HCT116 (cell line): ENCODE measurements at regions of chr10 and their contacts with region 1.

Region 1: DNA sequence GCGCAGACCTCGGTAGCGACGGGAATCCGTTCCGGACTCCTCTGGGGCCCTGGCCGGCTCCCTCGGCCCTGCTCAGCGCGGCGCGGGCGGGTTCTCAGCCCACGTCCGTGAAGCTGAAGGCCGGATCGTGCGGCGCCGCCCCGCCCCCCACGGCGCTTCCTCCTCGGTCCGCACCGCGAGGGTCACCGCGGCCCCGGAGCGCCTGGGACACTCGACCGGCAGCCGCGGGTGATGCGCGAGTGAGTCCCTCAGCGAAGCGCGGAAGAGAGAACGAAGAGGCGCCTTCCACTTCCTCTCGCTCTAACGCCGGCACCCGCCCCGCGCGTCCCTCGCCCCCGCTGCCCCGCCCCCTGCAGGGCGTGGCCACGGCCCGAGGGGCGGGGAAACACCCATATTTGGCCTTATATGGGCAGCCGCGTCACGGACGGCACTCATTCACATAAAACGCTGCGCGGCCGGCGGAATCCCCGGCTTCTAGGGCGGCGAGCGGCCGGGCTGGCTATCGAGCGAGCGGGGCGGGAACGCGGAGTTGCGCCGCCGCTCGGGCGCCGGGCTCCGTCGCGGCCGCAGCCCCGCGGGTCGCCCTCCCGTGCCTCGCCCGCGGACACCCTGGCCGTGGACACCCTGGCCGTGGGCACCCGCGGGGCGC is at the start of gene DUSP5:
- DNase-seq: peak; percentile 93
- ATAC-seq: peak; percentile 64
- H3K4me3 ChIP-seq: peak within 1 kb of the TSS; percentile 90 to 92
- H3K27ac ChIP-seq: peak within 1 kb of the TSS; percentile 65
- H3K4me1 ChIP-seq: peaks cover 41 to 72% of the 10 kb centered on the region in 2 experiments
- H3K27me3 ChIP-seq: no peaks in the 10 kb centered on the region
- CTCF ChIP-seq: no peak
- POLR2A ChIP-seq: peak; percentile 98
- RAD21 ChIP-seq: no peak
- total RNA-seq, gene DUSP5: 137 TPM

Region 2: GRCh38 chr10:110304780-110305421 is 192.7 kb before region 1 on chr10 and contains the start of gene SMNDC1:
- CTCF ChIA-PET with region 1: interaction called, 8 read pairs
- POLR2A ChIA-PET with region 1: interaction called, 7 read pairs
- RAD21 ChIA-PET with region 1: interaction called in 1 of 2 experiments, 5 read pairs
- intact Hi-C with region 1: loop called (anchors 1 kb)
- DNase-seq: peak; percentile 99
- ATAC-seq: peak; percentile 94
- H3K4me3 ChIP-seq: peak within 1 kb of the TSS; percentile 88 to 91
- H3K27ac ChIP-seq: peak within 1 kb of the TSS; percentile 77
- H3K4me1 ChIP-seq: peaks cover 12 to 26% of the 10 kb centered on the region in 2 experiments; a peak in 3 of 4 replicates
- H3K27me3 ChIP-seq: no peaks in the 10 kb centered on the region
- CTCF ChIP-seq: no peak
- POLR2A ChIP-seq: peak; percentile 77
- RAD21 ChIP-seq: no peak
- total RNA-seq, gene SMNDC1: 61.7 TPM

Region 3: GRCh38 chr10:110354322-110354766 is 143.2 kb before region 1 on chr10:
- CTCF ChIA-PET with region 1: interaction called, 9 read pairs
- POLR2A ChIA-PET with region 1: interaction called, 29 read pairs
- RAD21 ChIA-PET with region 1: interaction called, 3 to 7 read pairs
- intact Hi-C with region 1: loop called (anchors 1 kb)
- DNase-seq: peak; percentile 85
- ATAC-seq: peak; percentile 76
- H3K4me3 ChIP-seq: peak overlapping the region; percentile 27 to 36
- H3K27ac ChIP-seq: 0 out of 2 replicates have a peak overlapping the region, but pooled peaks have one; percentile 6
- H3K4me1 ChIP-seq: peaks cover 58 to 68% of the 10 kb centered on the region in 2 experiments
- H3K27me3 ChIP-seq: no peaks in the 10 kb centered on the region
- CTCF ChIP-seq: peak in 2 of 3 experiments; percentile 97; a peak in 4 of 6 replicates
- POLR2A ChIP-seq: no peak
- RAD21 ChIP-seq: no peak

Region 4: GRCh38 chr10:110414563-110415309 is 82.8 kb before region 1 on chr10:
- CTCF ChIA-PET with region 1: no interaction called
- POLR2A ChIA-PET with region 1: interaction called, 438 read pairs
- RAD21 ChIA-PET with region 1: interaction called, 3 to 4 read pairs
- intact Hi-C with region 1: loop called (anchors 1 kb)
- DNase-seq: peak; percentile 98
- ATAC-seq: peak; percentile 70
- H3K4me3 ChIP-seq: peak overlapping the region in 1 of 2 experiments; percentile 32; a peak in 2 of 4 replicates
- H3K27ac ChIP-seq: peak overlapping the region; percentile 95
- H3K4me1 ChIP-seq: peaks cover 84 to 92% of the 10 kb centered on the region in 2 experiments
- H3K27me3 ChIP-seq: no peaks in the 10 kb centered on the region
- CTCF ChIP-seq: no peak
- POLR2A ChIP-seq: peak; percentile 18
- RAD21 ChIP-seq: no peak

Region 5: DNA sequence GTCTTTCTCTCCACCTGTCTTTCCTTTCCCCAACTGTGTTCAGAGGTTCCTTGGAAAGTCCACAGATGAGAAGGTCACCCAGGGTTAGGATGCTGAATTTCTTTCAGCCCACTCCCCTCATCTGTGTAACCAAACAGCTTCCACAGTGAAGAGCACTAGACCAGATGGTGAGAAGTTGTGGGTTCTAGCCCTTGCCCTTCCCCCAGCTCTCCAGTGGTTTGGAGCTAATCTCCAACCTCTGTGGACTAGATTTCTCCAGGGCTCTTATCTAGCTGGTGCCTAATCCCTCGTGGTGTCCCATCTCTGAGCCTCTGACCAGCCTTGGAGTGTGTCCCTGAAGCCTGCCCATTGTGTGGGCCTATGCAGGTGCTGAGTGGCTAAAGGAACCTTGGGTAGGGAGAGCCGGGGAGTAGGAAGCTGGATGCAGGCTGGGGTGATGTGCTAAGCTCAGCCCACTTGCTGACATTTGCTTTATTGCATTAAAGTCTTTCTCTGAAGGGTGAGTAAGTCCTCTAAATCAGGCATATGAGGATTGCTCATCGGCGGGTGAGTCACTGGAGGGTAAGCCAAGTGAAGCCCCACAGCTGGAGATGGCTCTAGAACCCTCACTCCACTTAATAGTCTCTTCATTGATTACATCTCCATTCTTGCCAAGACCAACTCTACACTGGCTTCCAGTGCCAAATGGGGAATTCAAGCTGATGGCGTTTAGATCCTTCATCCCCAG is 15.1 kb after region 1 on chr10:
- CTCF ChIA-PET with region 1: interaction called, 3 read pairs
- POLR2A ChIA-PET with region 1: interaction called, 19 read pairs
- RAD21 ChIA-PET with region 1: no interaction called
- intact Hi-C with region 1: no loop called
- DNase-seq: no peak
- ATAC-seq: peak; percentile 67
- H3K4me3 ChIP-seq: no peak overlapping the region
- H3K27ac ChIP-seq: peak overlapping the region; percentile 33
- H3K4me1 ChIP-seq: peaks cover 8 to 55% of the 10 kb centered on the region in 2 experiments; a peak in 3 of 4 replicates
- H3K27me3 ChIP-seq: no peaks in the 10 kb centered on the region
- CTCF ChIP-seq: no peak
- POLR2A ChIP-seq: no peak
- RAD21 ChIP-seq: 0 out of 2 replicates have a peak, but pooled peaks have one; percentile 17

Region 6: DNA sequence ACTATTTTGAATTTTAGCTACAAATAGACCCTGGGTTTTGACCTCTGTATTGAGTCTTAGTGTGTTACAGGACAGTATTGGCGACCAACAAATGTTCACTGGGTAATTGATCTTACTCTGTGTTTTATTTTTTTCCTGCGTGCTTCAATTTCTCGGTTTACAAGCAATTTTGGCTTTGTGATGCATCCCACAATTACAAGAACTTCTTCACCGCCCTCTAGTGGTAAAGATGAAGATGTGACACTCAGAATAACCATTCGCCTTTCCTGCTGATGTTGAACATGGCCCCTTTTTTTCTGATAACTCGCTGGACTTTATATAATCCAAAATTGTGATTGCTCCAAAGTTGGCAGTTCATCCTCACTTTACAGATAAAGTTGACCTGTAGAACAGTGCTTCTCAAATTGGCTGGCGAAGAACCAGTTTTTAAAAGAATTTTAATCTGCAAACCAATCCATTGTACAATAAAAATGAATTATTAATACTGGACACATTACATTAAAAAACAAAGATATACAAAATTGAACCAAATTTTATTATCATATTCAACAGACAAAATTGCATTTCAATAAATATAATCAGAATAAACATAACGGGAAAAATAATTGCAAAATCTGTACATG is 49.7 kb after region 1 on chr10:
- CTCF ChIA-PET with region 1: no interaction called
- POLR2A ChIA-PET with region 1: no interaction called
- RAD21 ChIA-PET with region 1: interaction called in 1 of 2 experiments, 3 read pairs
- intact Hi-C with region 1: loop called (anchors 2 kb)
- DNase-seq: peak; percentile 66
- ATAC-seq: peak; percentile 85
- H3K4me3 ChIP-seq: no peak overlapping the region
- H3K27ac ChIP-seq: no peak overlapping the region
- H3K4me1 ChIP-seq: peaks cover 0 to 7% of the 10 kb centered on the region in 2 experiments; a peak in 2 of 4 replicates
- H3K27me3 ChIP-seq: no peaks in the 10 kb centered on the region
- CTCF ChIP-seq: peak; percentile 82 to 98 (median 91)
- POLR2A ChIP-seq: no peak
- RAD21 ChIP-seq: peak; percentile 98

Region 7: GRCh38 chr10:110600487-110601101 is 103.0 kb after region 1 on chr10:
- CTCF ChIA-PET with region 1: no interaction called
- POLR2A ChIA-PET with region 1: no interaction called
- RAD21 ChIA-PET with region 1: no interaction called
- intact Hi-C with region 1: loop called (anchors 5 kb)
- DNase-seq: peak; percentile 87
- ATAC-seq: peak; percentile 98
- H3K4me3 ChIP-seq: no peak overlapping the region
- H3K27ac ChIP-seq: no peak overlapping the region
- H3K4me1 ChIP-seq: no peaks in the 10 kb centered on the region
- H3K27me3 ChIP-seq: no peaks in the 10 kb centered on the region
- CTCF ChIP-seq: peak; percentile 73 to 86 (median 85)
- POLR2A ChIP-seq: no peak
- RAD21 ChIP-seq: peak; percentile 74

Region 8: GRCh38 chr10:111539246-111539645 is 1041.7 kb after region 1 on chr10:
- CTCF ChIA-PET with region 1: no interaction called
- POLR2A ChIA-PET with region 1: no interaction called
- RAD21 ChIA-PET with region 1: no interaction called
- intact Hi-C with region 1: no loop called
- DNase-seq: no peak
- ATAC-seq: no peak
- H3K4me3 ChIP-seq: no peak overlapping the region
- H3K27ac ChIP-seq: no peak overlapping the region
- H3K4me1 ChIP-seq: no peaks in the 10 kb centered on the region
- H3K27me3 ChIP-seq: peaks cover 27% of the 10 kb centered on the region
- CTCF ChIP-seq: no peak
- POLR2A ChIP-seq: no peak
- RAD21 ChIP-seq: no peak